MCF 10A (cell line): ENCODE measurements at regions of chr2 and their contacts with region 1.

Region 1: GRCh38 chr2:235135990-235136561 is 184.3 kb downstream of the SH3BP4 start:
- DNase-seq: peak; percentile 86
- H3K4me3 Mint-ChIP-seq: peak overlapping the region; percentile 18
- H3K27ac Mint-ChIP-seq: no peak overlapping the region
- H3K4me1 Mint-ChIP-seq: peaks cover 7% of the 10 kb centered on the region
- H3K27me3 Mint-ChIP-seq: peaks cover 36% of the 10 kb centered on the region
- CTCF ChIP-seq: peak; percentile 63

Region 2: GRCh38 chr2:235551965-235552364 is 415.9 kb after region 1 on chr2:
- CTCF ChIA-PET with region 1: interaction called, 3 read pairs
- POLR2A ChIA-PET with region 1: interaction called, 4 read pairs
- intact Hi-C with region 1: loop called (anchors 1 kb)
- DNase-seq: peak; percentile 70
- H3K4me3 Mint-ChIP-seq: no peak overlapping the region
- H3K27ac Mint-ChIP-seq: no peak overlapping the region
- H3K4me1 Mint-ChIP-seq: peaks cover 6% of the 10 kb centered on the region
- H3K27me3 Mint-ChIP-seq: no peaks in the 10 kb centered on the region
- CTCF ChIP-seq: peak; percentile 57

Region 3: GRCh38 chr2:235666213-235666781 is 530.2 kb after region 1 on chr2:
- CTCF ChIA-PET with region 1: interaction called, 4 read pairs
- POLR2A ChIA-PET with region 1: no interaction called
- intact Hi-C with region 1: loop called (anchors 10 kb)
- DNase-seq: peak; percentile 88
- H3K4me3 Mint-ChIP-seq: peak overlapping the region; percentile 82
- H3K27ac Mint-ChIP-seq: peak overlapping the region; percentile 83
- H3K4me1 Mint-ChIP-seq: peaks cover 10% of the 10 kb centered on the region
- H3K27me3 Mint-ChIP-seq: no peaks in the 10 kb centered on the region
- CTCF ChIP-seq: no peak